Calu3 (cell line): ENCODE measurements at regions of chr7 and their contacts with region 1.

Region 1: DNA sequence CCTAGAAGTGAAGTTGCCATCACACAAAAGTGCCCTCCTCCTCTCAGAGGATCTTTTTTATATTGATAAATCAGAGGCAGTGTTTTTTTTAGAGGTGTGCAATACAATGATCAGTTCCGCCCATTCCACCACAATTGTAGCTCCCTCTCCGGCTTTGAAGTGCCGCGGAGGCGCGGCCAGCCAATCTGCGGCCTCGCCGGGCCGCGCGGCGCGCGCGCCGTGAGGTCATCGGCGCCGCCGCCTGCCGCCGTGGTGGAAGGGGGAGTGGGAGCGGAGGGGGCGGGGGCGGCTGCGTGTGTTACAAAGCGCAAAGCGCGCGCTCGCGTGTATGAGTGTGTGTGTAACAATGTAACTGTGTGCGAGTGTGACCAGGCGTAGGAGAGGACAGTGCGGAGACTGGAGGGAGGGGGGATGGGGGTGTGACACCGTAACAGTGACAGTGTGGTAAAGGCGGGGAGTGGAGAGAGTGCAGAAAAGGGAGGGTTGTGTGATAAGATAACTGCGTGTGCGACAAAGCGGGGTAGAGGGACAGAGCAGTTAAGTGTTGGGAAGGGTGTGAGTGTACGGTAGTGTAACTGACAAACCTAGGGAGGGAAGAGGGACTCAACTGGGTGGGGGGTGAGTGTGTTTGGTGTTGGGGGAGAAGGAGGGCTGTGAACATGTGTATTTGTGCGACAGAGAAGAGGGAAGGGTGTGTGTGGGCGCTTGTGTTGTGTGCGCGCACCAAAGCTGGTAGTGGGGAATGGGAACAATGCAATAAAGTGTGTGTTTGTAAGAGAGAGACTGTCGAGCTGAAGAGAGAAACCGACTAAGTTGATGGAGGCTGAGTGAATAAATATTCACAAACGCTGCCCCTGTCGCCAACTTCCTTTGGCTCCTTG is at the start of gene SP8:
- DNase-seq: peak; percentile 59
- H3K4me3 Mint-ChIP-seq: peak within 1 kb of the TSS; percentile 88
- H3K27ac Mint-ChIP-seq: peak within 1 kb of the TSS; percentile 35
- H3K4me1 Mint-ChIP-seq: peaks cover 38% of the 10 kb centered on the region
- H3K27me3 Mint-ChIP-seq: peaks cover 94% of the 10 kb centered on the region
- CTCF ChIP-seq: no peak
- total RNA-seq, gene SP8: not detected in 2 replicates

Region 2: GRCh38 chr7:20270867-20271266 is 516.2 kb before region 1 on chr7:
- CTCF ChIA-PET with region 1: no interaction called
- intact Hi-C with region 1: no loop called
- DNase-seq: no peak
- H3K4me3 Mint-ChIP-seq: no peak overlapping the region
- H3K27ac Mint-ChIP-seq: no peak overlapping the region
- H3K4me1 Mint-ChIP-seq: peaks cover 23% of the 10 kb centered on the region
- H3K27me3 Mint-ChIP-seq: no peaks in the 10 kb centered on the region
- CTCF ChIP-seq: no peak

Region 3: GRCh38 chr7:20834656-20835055 is 47.6 kb after region 1 on chr7:
- CTCF ChIA-PET with region 1: interaction called, 11 read pairs
- intact Hi-C with region 1: no loop called
- DNase-seq: no peak
- H3K4me3 Mint-ChIP-seq: no peak overlapping the region
- H3K27ac Mint-ChIP-seq: no peak overlapping the region
- H3K4me1 Mint-ChIP-seq: no peaks in the 10 kb centered on the region
- H3K27me3 Mint-ChIP-seq: peaks cover 48% of the 10 kb centered on the region
- CTCF ChIP-seq: peak; percentile 56

Region 4: DNA sequence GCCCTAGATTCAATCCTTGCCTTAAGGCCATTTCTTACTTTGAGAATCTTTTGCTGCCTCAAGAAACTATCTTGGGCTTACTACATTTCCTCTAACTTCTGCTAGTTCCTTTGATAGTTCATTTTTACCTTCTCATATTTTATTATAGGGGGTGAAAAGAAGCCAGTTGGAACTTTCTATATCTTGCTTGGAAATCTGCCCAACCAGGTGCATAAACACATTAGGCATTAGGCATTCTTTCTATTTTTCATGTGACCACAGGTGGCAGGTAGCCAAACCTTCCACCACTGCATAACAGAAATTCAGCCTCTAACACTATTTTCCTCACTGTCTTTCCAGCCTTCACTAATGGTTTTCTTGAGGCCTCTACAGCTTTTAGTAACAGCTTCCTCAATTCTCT is 299.7 kb after region 1 on chr7:
- CTCF ChIA-PET with region 1: no interaction called
- intact Hi-C with region 1: loop called (anchors 5 kb)
- DNase-seq: peak; percentile 84
- H3K4me3 Mint-ChIP-seq: no peak overlapping the region
- H3K27ac Mint-ChIP-seq: no peak overlapping the region
- H3K4me1 Mint-ChIP-seq: peaks cover 34% of the 10 kb centered on the region
- H3K27me3 Mint-ChIP-seq: peaks cover 81% of the 10 kb centered on the region
- CTCF ChIP-seq: no peak

Region 5: DNA sequence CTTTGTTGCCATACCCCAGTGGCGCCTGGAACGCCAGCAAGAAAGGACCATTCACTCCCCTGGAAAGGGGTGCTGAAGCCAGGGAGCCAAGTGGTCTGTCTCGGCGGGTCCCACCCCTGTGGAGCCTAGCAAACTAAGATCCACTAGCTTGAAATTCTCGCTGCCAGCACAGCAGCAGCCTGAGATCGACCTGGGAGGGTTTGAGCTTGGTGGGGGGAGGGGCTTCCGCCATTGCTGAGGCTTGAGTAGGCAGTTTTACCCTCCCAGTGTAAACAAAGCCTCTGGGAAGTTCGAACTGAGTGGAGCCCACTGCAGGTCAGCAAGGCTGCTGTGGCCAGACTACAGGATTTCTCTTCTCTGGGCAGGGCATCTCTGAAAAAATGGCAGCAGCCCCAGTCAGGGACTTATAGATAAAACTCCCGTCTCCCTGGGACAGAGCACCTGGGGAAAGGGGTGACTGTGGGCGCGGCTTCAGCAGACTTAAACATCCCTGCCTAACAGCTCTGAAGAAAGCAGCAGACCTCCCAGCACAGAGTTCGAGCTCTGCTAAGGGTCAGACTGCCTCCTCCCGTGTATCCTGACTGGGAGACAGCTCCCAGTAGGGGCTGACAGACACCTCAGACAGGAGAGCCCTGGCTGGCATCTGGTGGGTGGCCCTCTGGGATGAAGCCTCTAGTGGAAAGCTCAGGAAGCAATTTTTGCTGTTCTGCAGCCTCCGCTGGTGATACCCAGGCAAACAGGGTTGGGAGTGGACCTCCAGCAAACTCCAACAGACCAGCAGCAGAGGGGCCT is 359.8 kb after region 1 on chr7:
- CTCF ChIA-PET with region 1: no interaction called
- intact Hi-C with region 1: loop called (anchors 10 kb)
- DNase-seq: no peak
- H3K4me3 Mint-ChIP-seq: no peak overlapping the region
- H3K27ac Mint-ChIP-seq: no peak overlapping the region
- H3K4me1 Mint-ChIP-seq: no peaks in the 10 kb centered on the region
- H3K27me3 Mint-ChIP-seq: peaks cover 93% of the 10 kb centered on the region
- CTCF ChIP-seq: no peak